ENCODE measurements at regions of chr1 and their contacts with region 1.

Region 1: GRCh38 chr1:9004700-9005394 is 21.4 kb downstream of the SLC2A7 start:
- DNase-seq: peak; percentile 29
- H3K4me3 ChIP-seq: no peak overlapping the region
- CTCF ChIP-seq: peak; percentile 97

Region 2: DNA sequence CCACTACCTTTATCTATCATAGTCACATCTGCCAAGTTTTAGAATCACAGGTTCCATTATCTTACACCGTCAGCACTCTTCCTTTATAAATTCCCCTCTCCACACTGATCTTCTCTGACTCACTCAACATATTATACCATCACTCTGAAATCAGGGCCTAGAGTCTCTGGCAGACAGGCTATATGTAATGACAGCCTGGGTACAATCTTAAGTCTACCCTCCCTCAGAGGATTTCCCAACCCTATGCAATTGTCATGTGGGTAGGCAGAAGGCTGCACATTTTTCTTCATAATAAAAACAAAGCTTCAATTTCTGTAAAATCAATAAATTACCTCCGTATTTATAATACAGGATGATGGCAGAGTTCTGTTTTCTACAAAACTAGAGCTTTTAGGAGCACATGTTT is 325.4 kb before region 1 on chr1:
- CTCF ChIA-PET with region 1: no interaction called
- POLR2A ChIA-PET with region 1: no interaction called
- DNase-seq: no peak
- H3K4me3 ChIP-seq: no peak overlapping the region
- CTCF ChIP-seq: no peak

Region 3: GRCh38 chr1:8925406-8925805 is 79.4 kb before region 1 on chr1:
- CTCF ChIA-PET with region 1: interaction called, 189 read pairs
- POLR2A ChIA-PET with region 1: no interaction called
- DNase-seq: no peak
- H3K4me3 ChIP-seq: no peak overlapping the region
- CTCF ChIP-seq: no peak

Region 4: DNA sequence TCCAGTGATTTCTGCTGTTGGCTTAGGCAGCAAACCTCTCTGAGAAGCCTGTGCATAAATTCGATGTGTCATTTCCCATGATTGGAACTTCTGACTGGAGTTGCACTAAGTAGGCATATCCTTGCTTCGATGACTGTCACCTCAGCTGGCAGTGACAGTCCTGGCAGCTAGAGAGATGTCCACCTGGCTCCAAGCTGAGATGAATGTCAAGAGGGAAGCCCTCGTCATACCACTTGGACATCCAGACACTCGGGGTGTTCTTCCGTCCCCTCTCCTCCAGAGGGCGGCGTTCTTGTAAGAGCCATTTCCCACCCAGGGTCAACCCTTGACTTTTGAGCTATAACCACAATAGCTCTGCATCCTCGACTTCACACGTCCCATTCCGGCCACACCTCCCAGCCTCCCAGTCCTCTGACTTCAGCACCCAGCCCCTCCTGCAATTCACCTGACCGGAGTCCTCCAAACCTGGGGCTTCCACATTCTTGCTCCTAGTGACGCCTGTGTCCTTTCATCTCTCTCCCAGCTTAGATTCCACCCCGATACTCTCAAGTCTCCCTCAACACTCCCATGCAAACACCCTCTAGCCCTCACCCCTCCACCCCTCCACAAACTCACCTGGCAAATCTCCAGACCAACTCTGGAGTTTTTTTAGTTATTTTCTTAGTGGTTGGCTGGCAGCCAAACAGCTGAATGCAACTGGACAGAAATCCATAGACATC is 41.9 kb before region 1 on chr1:
- CTCF ChIA-PET with region 1: interaction called, 27 read pairs
- POLR2A ChIA-PET with region 1: no interaction called
- DNase-seq: no peak
- H3K4me3 ChIP-seq: no peak overlapping the region
- CTCF ChIP-seq: peak; percentile 37

Region 5: DNA sequence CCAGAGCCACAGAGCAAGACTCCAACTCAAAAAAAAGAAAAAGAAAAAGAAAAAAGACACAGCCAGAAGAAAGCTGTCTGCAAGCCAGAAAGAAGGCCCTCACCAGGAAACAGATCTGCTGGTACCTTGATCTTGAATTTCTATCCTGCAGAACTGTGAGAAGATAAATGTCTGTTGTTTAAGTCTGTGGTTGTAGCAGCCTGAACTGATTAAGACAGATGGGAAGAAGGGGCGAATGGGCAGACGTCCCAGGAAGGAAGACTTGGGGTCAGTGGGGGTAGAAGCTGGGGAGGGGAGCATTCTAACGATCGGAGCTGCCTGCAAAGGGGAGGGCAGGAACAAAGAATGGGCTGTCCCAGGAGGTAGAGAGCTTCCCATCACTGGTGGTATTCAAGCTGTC is 15.0 kb after region 1 on chr1:
- CTCF ChIA-PET with region 1: interaction called, 43 read pairs
- POLR2A ChIA-PET with region 1: no interaction called
- DNase-seq: no peak
- H3K4me3 ChIP-seq: no peak overlapping the region
- CTCF ChIP-seq: no peak

Region 6: GRCh38 chr1:9058465-9058864 is 53.6 kb after region 1 on chr1:
- CTCF ChIA-PET with region 1: interaction called, 18 read pairs
- POLR2A ChIA-PET with region 1: no interaction called
- DNase-seq: no peak
- H3K4me3 ChIP-seq: no peak overlapping the region
- CTCF ChIP-seq: peak; percentile 50

Measured in AG04449 (cell line).